Heart left ventricle (tissue), 16 donors: ENCODE measurements at regions of chr20 and their contacts with region 1.

Region 1: DNA sequence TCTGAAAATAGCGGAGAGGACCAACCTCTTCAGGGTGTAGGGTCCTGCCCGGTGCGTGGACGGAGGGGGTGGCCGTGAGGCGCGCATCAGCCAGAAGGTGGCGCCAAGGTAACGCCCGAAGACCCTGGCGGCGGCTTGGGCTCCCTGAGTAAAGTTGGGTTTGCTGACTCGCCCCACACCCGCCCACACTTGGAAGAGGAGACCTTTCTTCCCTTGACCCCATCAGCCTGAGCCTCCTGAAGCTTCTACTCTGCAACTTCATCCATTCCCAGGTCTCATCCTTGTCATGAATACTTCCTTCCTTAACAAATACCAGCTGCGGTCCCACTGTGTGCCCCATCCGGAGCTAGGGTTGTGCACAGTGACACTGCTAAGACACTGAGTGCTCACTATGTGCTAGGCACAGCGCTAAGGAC is 14.6 kb downstream of the CD40 start:
- DNase-seq: peak; percentile 54 to 82 (median 71)
- ATAC-seq: peak; percentile 81 to 92 (median 86)
- H3K4me3 ChIP-seq: no peak overlapping the region
- H3K27ac ChIP-seq: no peak overlapping the region
- H3K4me1 ChIP-seq: peaks cover 0 to 20% (median 9%) of the 10 kb centered on the region in 12 donors
- H3K27me3 ChIP-seq: peaks cover 0 to 38% (median 10%) of the 10 kb centered on the region in 9 donors
- CTCF ChIP-seq: peak; percentile 74 to 89 (median 84)
- POLR2A ChIP-seq: no peak

Region 2: DNA sequence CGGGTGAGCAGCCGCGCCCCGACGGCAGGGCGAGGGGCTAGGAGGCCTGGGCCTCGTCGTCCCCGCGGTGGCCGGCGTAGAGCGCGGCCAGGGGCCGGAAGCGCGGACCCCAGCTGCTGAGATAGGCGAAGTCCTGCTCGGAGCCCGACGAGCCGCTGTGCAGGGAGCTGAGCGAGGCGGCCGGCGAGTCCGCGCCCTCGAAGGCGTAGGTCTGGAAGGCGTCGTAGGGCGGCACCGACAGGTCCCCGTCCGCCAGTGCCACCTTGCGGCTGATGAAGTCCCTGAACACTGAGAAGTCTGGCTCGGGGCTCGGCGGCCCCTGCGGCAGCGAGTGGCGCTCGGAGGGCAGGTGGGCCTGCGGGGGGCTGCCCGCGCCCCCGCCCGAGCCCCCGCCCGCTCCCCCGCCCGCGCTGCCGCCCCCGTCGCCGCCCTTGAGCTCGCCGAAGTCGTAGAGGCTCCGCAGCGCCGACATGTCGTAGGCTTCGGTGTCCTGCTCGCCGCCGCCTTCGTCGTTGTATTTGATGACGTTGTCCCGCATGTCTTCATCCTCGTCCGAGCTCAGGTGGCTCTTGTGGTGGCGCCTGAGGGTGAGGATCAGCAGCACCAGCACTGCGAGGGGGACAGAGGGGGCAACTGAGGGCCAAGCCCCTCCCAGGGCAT is 41.9 kb after region 1 on chr20:
- intact Hi-C with region 1: loop called in 3 of 10 experiments (anchors 2 to 5 kb)
- DNase-seq: peak; percentile 58 to 86 (median 77)
- ATAC-seq: peak in 3 of 4 donors; percentile 68 to 85 (median 80)
- H3K4me3 ChIP-seq: peak overlapping the region in 1 of 12 donors; percentile 33
- H3K27ac ChIP-seq: no peak overlapping the region
- H3K4me1 ChIP-seq: peaks cover 0 to 9% (median 0%) of the 10 kb centered on the region in 12 donors
- H3K27me3 ChIP-seq: peaks cover 18 to 62% (median 34%) of the 10 kb centered on the region in 9 donors
- CTCF ChIP-seq: peak; percentile 45 to 85 (median 64)
- POLR2A ChIP-seq: no peak

Region 3: GRCh38 chr20:46206025-46206424 is 73.3 kb after region 1 on chr20:
- intact Hi-C with region 1: no loop called
- DNase-seq: peak; percentile 45 to 72 (median 46)
- ATAC-seq: peak; percentile 21 to 71 (median 58)
- H3K4me3 ChIP-seq: no peak overlapping the region
- H3K27ac ChIP-seq: peak overlapping the region in 1 of 12 donors; percentile 46
- H3K4me1 ChIP-seq: peaks cover 0 to 51% (median 4%) of the 10 kb centered on the region in 12 donors
- H3K27me3 ChIP-seq: peaks cover 2 to 34% (median 11%) of the 10 kb centered on the region in 9 donors
- CTCF ChIP-seq: no peak
- POLR2A ChIP-seq: no peak

Region 4: DNA sequence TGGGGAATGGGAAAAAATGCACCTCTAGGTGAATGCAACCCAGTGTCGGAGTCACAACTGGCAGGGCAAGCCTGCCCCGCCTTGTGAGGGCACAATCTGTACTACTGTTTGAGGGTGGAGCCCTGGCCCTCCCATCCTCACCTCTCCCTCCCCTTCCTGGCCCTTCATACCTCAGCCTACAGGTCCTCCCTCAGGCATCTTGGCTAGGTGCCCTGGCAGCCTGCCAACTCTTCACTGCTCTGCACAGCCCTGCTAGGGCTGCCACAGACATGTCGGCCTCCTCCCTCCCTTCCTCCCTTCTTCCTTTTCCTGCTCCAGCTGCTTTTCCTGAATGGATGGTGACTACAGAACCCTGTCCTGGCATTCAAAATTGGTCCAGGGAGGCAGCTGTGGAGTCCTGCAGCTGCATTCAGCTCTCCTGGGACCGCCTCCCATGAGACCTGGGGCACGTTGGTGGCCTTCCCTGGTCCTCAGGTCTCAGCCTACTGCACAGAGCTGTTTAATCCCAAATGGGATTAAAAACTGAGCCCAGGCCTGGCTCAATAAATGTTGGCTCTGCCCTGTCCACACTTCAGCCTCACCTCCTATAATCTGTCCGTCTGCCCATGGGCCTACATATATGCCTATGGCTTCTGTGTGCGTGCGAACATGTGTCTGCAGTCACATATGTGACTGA is 122.9 kb after region 1 on chr20:
- intact Hi-C with region 1: loop called in 1 of 10 experiments (anchors 5 kb)
- DNase-seq: peak; percentile 64 to 88 (median 79)
- ATAC-seq: peak; percentile 74 to 90 (median 82)
- H3K4me3 ChIP-seq: no peak overlapping the region
- H3K27ac ChIP-seq: no peak overlapping the region
- H3K4me1 ChIP-seq: peaks cover 0 to 13% (median 1%) of the 10 kb centered on the region in 12 donors
- H3K27me3 ChIP-seq: peaks cover 14 to 63% (median 27%) of the 10 kb centered on the region in 9 donors
- CTCF ChIP-seq: no peak
- POLR2A ChIP-seq: no peak

Region 5: GRCh38 chr20:46307139-46307998 is 174.7 kb after region 1 on chr20:
- intact Hi-C with region 1: loop called in 6 of 10 experiments (anchors 2 to 10 kb)
- DNase-seq: peak; percentile 18 to 82 (median 42)
- ATAC-seq: peak in 3 of 4 donors; percentile 51 to 64 (median 62)
- H3K4me3 ChIP-seq: peak overlapping the region; percentile 22 to 59 (median 45)
- H3K27ac ChIP-seq: no peak overlapping the region
- H3K4me1 ChIP-seq: peaks cover 0 to 27% (median 8%) of the 10 kb centered on the region in 12 donors
- H3K27me3 ChIP-seq: peaks cover 33 to 97% (median 71%) of the 10 kb centered on the region in 9 donors
- CTCF ChIP-seq: peak; percentile 51 to 78 (median 65)
- POLR2A ChIP-seq: no peak

Region 6: DNA sequence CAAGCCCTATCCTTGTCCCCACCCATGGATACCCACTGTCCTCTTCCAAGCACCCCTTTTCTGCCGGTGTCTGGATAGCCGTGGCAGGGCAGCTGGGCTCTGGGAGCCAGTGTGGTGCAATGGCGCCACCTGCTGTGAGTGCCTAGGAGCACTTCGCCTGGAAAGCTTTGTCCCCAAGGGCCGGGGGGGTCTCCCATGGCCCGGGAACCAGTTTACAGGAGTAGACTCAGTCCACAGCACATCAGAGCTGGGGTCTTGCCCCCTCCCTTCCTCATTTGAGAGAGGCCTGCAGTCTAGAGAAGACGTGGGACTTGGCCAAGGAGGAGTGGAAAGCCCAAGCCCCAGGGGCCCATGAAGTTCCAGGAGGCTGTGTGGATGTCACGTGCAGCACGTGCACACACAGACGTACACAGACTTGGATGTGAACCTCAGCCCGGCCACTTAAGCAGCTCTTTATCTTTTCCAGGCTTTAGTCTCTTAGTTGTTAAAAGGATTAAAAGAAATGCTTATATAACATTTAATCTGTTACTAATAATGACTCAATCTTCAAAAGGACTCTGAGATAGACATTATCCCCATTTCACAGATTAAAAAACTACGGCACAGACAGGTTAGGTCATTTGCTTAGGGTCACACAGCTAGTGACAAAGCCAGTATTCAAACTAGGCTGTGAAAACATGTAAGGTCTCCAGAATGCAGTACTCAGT is 216.5 kb after region 1 on chr20:
- intact Hi-C with region 1: loop called (anchors 1 to 5 kb)
- DNase-seq: peak; percentile 41 to 81 (median 55)
- ATAC-seq: peak; percentile 47 to 80 (median 71)
- H3K4me3 ChIP-seq: peak overlapping the region in 4 of 12 donors; percentile 14 to 34 (median 20)
- H3K27ac ChIP-seq: peak overlapping the region in 1 of 12 donors; percentile 0
- H3K4me1 ChIP-seq: peaks cover 0 to 22% (median 9%) of the 10 kb centered on the region in 12 donors
- H3K27me3 ChIP-seq: no peaks in the 10 kb centered on the region
- CTCF ChIP-seq: peak; percentile 65 to 83 (median 77)
- POLR2A ChIP-seq: no peak

Region 7: DNA sequence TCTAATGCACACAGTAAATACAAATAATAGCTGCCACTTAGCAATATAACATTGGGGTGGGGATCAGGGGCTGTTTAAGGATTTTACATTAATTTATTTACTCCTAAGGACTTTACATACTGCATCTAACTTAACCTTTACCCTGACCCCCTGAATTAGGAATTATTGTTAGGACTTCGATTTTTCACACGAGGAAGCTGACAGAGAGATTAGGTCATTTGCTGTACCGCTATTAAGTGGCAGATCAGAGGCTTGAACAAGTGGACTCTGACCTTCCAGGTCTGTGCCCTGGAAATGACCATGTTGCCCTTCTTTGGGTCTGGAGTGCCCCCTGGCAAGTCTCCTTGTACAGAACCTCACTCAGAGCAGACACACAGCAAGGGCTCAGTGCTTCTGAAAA is 278.9 kb after region 1 on chr20:
- intact Hi-C with region 1: loop called in 1 of 10 experiments (anchors 2 kb)
- DNase-seq: no peak
- ATAC-seq: no peak
- H3K4me3 ChIP-seq: no peak overlapping the region
- H3K27ac ChIP-seq: no peak overlapping the region
- H3K4me1 ChIP-seq: peaks cover 0 to 18% (median 7%) of the 10 kb centered on the region in 12 donors
- H3K27me3 ChIP-seq: peaks cover 0 to 13% (median 0%) of the 10 kb centered on the region in 9 donors
- CTCF ChIP-seq: no peak
- POLR2A ChIP-seq: no peak

Region 8: DNA sequence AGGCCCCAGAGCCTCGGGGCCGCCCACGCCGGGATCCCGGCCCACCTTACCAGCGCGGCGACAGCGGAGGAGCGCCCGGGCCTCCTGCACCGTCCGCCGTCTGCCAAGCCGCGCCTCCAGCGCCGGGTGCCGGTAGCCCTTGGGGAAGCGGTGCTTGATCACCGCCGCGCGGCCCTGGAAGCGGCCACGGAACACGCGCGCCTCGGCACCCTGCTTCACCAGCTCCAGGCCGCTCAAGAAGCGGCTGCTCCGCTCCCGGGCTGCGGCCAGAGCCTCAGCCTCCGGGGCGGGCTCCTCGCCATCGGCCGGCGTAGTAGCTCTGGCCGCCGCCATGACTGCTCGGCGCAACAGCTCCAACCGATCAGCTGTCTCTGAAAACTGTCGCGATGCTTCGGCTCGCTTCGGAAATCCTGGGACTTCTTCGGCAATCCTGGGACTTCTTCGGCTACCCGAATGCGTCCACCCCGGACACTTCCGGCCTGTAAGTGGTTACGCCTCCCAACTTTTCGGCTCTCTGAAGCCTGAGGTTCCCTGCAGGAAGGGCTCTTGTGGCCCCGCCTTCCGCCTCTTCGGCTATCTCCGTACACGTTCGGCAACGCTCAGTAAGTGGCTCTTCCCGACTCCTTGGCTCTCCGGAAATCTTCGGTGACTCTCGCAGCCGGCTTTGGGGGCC is 556.5 kb after region 1 on chr20 and contains the start of gene TP53RK:
- intact Hi-C with region 1: loop called in 1 of 10 experiments (anchors 10 kb)
- DNase-seq: peak; percentile 98 to 99 (median 99)
- ATAC-seq: peak; percentile 97 to 99 (median 98)
- H3K4me3 ChIP-seq: peak within 1 kb of the TSS; percentile 63 to 92 (median 76)
- H3K27ac ChIP-seq: peak within 1 kb of the TSS; percentile 75 to 98 (median 92)
- H3K4me1 ChIP-seq: peaks cover 0 to 33% (median 21%) of the 10 kb centered on the region in 12 donors
- H3K27me3 ChIP-seq: no peaks in the 10 kb centered on the region
- CTCF ChIP-seq: peak in 9 of 12 donors; percentile 10 to 56 (median 39)
- POLR2A ChIP-seq: peak in 1 of 2 donors; percentile 87
- total RNA-seq, gene TP53RK: 5.1 to 10.8 (median 7.9) TPM